Psoas muscle (tissue), 8 donors: ENCODE measurements at regions of chr1 and their contacts with region 1.

Region 1: DNA sequence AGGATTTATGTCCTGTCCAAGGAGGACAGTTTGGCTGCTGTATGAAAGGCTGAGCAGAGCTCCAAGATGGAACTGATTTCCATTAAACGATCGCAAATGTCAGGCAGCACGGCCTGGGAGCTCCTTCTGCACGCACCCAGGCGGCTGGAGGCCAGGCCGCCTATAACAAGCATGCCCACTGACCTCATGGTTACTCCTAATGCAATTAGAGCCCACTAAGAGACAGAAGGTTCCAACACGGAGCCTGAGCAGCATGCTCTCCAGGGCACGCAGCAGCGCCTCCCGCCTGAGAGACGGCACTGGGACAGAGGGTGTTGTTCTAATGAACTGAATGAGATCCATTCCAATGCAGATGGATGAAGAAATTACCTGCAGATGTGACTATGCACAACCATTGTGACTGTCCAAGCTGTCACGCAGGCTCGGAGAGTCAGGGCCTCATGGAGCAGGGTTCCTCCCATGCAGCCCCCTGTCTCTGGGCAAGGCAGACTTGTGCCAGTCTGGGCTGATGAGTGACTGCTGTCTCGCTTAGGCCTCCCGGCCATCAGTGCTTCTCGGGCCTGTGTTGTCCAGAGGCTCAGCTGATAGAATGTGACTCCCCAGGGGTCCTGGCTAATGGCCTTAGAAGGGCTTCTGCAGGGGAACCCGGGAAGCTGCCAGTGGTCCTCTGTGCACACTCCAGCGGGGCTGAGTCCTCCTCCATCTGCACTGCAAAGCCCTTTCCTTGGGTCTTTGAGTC is 25.1 kb upstream of the CDCA8 start:
- DNase-seq: no peak
- ATAC-seq: no peak
- H3K4me3 ChIP-seq: no peak overlapping the region
- H3K27ac ChIP-seq: no peak overlapping the region
- H3K4me1 ChIP-seq: no peaks in the 10 kb centered on the region
- H3K27me3 ChIP-seq: peaks cover 0 to 29% (median 4%) of the 10 kb centered on the region in 3 donors
- CTCF ChIP-seq: no peak

Region 2: DNA sequence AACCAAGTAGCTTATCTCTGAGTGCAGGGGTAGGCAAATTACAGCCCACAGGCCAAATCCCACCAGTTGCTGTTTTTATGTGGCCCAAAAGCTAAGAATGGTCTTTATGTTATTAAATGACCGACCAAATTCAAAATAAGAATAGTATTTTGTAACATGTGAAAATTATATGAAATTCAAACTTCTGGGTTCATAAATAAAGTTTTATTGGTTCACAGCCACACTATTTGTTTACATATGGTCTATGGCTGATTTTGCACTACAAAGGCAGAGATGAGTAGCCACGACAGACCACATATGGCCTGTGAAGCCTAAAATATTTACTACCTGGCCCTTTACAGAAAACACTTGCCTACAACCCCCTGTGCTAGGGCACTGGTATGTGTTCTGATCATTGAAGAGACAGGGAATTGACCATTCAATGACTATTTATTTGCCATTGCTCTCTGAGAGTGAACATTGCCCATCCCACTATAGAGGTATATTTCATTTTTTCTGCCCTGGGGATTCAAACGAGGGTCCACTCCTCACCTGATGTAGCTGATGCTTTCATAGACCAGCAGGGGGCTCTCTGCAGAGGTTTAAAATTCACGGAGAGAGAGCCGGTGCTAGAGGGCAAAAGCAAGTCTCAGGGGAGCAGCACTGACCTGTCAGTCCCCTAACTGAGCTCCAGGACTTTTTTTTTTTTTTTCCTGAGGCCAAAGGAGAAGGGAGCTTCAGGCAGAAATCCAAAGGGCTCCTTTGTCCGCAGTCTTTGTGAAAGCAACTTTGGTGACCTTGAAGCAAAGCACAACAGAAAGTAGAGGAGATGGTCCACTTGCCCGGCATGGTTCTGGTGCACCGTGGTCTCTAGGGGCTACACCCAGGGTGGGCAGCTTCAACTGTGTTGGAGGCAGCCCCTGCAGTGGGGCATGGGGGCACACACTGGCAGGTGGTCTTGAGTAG is 64.2 kb before region 1 on chr1:
- intact Hi-C with region 1: loop called in 1 of 2 experiments (anchors 5 kb)
- DNase-seq: no peak
- ATAC-seq: peak in 1 of 4 donors; percentile 60
- H3K4me3 ChIP-seq: no peak overlapping the region
- H3K27ac ChIP-seq: no peak overlapping the region
- H3K4me1 ChIP-seq: no peaks in the 10 kb centered on the region
- H3K27me3 ChIP-seq: peaks cover 0 to 10% (median 2%) of the 10 kb centered on the region in 3 donors
- CTCF ChIP-seq: peak; percentile 54